ENCODE measurements at regions of chr19 and their contacts with region 1.

Region 1: GRCh38 chr19:11708457-11708856 is 30.3 kb downstream of the ZNF823 start:
- DNase-seq: no peak
- ATAC-seq: no peak
- H3K4me3 ChIP-seq: no peak overlapping the region
- H3K27ac ChIP-seq: no peak overlapping the region
- H3K4me1 ChIP-seq: no peaks in the 10 kb centered on the region
- H3K27me3 ChIP-seq: no peaks in the 10 kb centered on the region
- CTCF ChIP-seq: no peak

Region 2: DNA sequence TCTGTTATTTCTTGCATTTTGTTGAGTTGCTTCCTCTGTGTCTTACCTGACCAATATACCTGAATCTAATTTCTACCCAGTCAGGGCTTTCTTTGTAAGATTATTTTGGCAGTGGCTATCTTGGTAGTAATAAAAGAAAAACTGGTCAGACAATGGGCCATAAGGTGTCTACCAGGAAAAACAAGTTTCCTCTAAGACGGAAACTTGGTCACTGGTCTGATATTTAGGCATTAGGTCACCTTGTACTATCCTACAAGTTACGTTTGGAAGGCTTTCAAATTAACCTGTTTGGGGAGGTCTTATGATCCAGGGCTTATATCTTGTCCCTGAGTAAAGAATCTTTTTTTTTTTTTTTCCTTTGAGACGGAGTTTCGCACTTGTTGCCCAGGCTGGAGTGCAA is 21.1 kb after region 1 on chr19:
- CTCF ChIA-PET with region 1: no interaction called
- POLR2A ChIA-PET with region 1: interaction called, 10 read pairs
- in situ Hi-C with region 1: no loop called
- intact Hi-C with region 1: no loop called
- DNase-seq: no peak
- ATAC-seq: no peak
- H3K4me3 ChIP-seq: no peak overlapping the region
- H3K27ac ChIP-seq: no peak overlapping the region
- H3K4me1 ChIP-seq: no peaks in the 10 kb centered on the region
- H3K27me3 ChIP-seq: no peaks in the 10 kb centered on the region
- CTCF ChIP-seq: no peak

Measured in Panc1 (cell line).